Sciatic nerve (tissue), 2 donors: ENCODE measurements at regions of chr12 and their contacts with region 1.

Region 1: DNA sequence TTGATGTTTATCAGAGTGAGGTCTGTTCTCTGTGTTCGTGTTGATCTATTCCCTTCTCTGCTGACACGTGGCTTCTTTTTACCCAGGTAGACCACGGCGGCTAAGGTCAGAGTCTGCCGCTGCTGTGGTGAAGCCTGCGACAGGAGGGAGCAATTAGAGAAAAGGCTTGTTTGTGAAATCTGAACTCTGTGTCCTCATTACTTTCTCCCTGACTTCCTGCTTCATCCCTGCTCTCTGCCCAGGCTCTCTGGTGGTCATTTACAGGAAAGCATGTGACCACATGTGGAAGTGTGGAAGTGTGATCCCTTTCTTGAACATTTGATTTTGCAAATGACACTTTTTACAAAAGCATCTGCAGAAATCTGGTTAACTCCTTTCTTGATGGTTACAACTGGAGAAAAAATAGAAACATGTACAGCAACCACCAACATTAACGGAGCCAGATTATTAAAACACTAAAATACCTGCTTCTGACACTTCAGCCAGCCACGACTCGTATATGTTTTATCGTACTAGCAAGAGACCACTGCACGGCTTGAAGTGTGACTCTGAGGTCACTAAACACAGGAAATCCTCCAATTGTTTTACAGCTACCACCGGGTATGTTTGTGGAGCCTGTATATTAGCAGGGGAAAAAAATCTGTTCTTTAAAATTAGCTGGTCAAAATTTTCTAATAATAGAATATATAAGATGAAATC is 388.6 kb upstream of the TMPO start:
- DNase-seq: no peak
- ATAC-seq: peak; percentile 71

Region 2: GRCh38 chr12:96811083-96811482 is 1315.7 kb before region 1 on chr12:
- intact Hi-C with region 1: loop called (anchors 10 kb)
- DNase-seq: no peak
- ATAC-seq: no peak